Sigmoid colon (tissue), 7 donors: ENCODE measurements at regions of chr11 and their contacts with region 1.

Region 1: DNA sequence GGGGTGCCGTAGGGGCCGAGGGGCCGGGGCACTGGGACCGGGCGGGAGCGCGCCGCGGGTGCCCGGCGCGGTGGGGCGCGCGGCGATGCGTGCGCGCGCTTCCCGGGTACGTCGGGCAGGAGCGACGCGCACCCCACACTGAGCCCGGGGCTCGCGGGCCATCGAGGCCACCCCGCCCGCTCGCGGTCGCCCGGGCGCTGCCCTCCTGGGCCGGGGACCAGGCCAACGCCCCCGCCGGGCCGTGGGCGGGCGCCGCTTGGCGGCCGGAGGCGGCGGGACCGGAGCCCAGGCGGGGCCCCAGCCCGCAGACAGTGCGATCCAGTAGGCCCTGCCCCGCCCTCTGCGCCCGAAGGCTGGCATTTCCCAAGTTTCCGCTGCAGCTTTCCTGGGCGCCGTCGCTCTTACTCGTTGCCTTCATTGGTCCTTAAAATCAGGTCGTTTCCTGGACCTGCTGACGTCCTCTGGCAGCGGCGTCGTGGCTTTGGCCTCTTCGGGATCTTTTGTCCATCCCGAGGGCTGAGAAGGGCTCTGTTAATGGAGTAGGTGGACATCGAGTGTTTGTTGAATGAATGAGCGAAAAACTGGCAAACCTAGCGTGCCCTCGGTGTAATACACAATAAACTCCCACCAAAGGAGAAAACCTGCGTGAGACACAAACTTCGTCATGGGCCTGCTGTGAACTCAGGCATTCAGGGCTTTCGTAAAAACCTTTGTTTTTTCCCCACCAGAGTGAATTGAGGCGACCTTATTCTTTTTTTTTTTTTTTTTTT is 638 bp downstream of the PARVA start:
- DNase-seq: peak; percentile 94
- H3K4me3 ChIP-seq: peak overlapping the region; percentile 51 to 83 (median 72)
- H3K27ac ChIP-seq: peak overlapping the region; percentile 97 to 99 (median 98)
- H3K4me1 ChIP-seq: peaks cover 0 to 65% (median 57%) of the 10 kb centered on the region in 4 donors
- H3K27me3 ChIP-seq: no peaks in the 10 kb centered on the region
- CTCF ChIP-seq: no peak
- EP300 ChIP-seq: peak in 2 of 4 donors; percentile 58 to 86
- POLR2A ChIP-seq: peak; percentile 37 to 57

Region 2: DNA sequence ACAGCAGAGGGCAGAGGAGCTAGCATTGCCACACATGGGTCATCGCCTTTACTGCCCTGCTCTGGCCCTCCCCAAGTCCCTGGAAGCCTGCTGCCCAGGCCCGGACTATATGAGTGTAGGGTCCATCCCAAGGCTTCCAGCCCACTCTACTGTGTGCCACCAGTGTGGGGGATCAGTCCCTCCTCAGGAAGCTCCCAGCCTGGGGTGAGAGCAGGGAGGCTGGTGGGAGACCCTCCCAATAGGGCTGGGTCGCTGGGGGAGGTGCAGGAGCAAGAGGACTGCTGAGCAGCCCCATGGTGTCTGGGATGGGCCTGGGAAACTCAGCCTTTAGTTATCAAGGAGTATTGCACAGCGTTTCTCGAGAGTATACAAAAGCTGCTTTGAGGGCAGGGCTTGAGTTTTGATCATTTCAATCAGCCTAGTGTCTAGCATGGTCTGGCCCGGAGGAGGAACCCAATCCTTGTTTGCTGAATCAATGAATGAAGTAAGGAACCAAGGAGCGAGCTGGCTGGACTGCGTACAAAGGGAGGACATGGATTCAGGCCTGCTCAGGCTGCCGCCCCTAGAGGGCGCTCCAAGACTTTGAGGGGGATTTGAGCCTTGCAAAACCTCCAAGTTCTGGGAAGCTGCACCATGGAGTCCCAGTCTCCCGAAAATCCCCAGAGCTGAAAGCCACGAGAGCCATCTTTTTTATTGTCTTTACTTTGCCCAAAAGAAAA is 89.6 kb before region 1 on chr11:
- intact Hi-C with region 1: loop called (anchors 5 kb)
- DNase-seq: peak; percentile 94
- H3K4me3 ChIP-seq: no peak overlapping the region
- H3K27ac ChIP-seq: peak overlapping the region; percentile 88 to 99 (median 92)
- H3K4me1 ChIP-seq: peaks cover 0 to 45% (median 39%) of the 10 kb centered on the region in 4 donors
- H3K27me3 ChIP-seq: no peaks in the 10 kb centered on the region
- CTCF ChIP-seq: peak; percentile 77 to 91 (median 84)
- EP300 ChIP-seq: no peak
- POLR2A ChIP-seq: no peak

Region 3: DNA sequence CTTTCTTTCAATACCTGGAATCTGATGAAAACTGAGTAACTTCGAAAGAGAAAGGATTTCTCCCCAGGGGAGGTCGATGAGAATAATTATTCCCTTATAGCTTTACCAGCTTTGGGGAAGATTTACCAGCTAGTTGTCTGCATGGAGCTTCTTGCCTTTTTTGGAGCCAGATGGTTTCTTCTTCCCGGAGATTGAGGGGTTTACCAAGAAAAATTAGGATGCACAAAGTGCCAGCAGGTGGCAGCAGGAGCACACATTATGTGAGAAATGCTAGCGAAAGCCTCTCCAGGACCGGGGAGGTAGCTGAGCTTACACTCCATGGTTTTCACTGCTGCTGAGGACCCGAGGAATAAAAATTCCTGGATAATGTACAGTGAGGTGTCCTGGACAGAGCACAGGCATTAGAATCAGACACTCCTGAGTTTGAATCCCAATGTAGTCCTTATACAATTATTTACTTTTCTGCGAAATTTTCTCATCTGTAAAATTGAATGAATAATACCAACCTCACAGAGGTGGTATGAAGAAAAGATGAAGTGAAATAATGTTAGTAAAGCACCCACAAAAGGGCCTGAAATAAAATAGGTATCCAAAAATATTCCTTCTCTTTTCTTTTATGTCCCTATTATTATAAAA is 46.7 kb before region 1 on chr11:
- intact Hi-C with region 1: loop called (anchors 2 kb)
- DNase-seq: peak; percentile 93
- H3K4me3 ChIP-seq: no peak overlapping the region
- H3K27ac ChIP-seq: peak overlapping the region; percentile 25 to 91 (median 84)
- H3K4me1 ChIP-seq: peaks cover 2 to 41% (median 34%) of the 10 kb centered on the region in 4 donors
- H3K27me3 ChIP-seq: no peaks in the 10 kb centered on the region
- CTCF ChIP-seq: peak; percentile 69 to 85 (median 76)
- EP300 ChIP-seq: no peak
- POLR2A ChIP-seq: no peak

Region 4: DNA sequence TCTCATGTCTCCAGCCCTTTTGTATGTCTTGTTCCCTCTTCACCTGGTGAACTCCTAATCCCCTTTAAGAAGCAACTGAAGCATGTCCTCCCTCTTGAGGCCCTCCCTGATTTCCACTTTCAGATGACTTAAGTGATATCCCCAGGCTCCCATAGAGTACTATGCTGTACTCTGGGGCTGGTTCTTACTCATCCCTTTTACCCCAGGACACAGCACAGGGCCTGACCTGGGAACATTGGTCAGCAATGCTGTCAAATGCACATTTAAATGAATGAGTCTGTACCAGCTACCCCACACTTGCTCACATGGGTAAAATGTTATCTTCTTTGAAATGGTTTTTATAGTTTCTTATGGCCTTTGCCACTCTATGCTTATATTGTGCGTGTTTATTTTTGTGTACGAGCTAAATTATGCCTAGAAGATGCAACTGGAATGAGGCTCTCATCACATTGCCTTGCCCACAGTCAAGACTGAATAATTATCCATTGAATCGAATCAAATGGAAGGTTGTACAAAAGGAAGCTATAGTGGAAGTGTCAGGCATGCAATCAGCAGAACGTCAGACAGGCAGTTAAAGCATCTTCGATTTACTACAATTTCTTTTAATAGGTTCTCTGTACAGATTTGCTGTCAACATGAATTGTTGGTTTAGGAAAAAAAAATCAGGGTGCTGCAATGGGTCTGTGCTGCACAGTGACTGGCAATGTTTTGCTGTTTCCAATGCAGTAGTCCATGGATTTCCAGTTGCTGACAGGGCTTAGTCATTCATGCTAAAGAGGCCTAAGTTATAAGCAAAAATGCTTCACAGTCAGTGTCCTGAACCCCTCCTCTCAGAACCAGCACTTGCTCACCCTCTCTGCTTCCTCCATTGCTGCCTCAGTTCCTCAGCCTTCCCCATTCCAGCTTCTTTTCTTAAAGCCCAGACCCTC is 78.9 kb after region 1 on chr11:
- intact Hi-C with region 1: loop called (anchors 5 kb)
- DNase-seq: no peak
- H3K4me3 ChIP-seq: no peak overlapping the region
- H3K27ac ChIP-seq: peak overlapping the region; percentile 63 to 90 (median 80)
- H3K4me1 ChIP-seq: peaks cover 0 to 100% (median 92%) of the 10 kb centered on the region in 4 donors
- H3K27me3 ChIP-seq: no peaks in the 10 kb centered on the region
- CTCF ChIP-seq: no peak
- EP300 ChIP-seq: no peak
- POLR2A ChIP-seq: no peak